ENCODE measurements at regions of chr1 and their contacts with region 1.

Region 1: DNA sequence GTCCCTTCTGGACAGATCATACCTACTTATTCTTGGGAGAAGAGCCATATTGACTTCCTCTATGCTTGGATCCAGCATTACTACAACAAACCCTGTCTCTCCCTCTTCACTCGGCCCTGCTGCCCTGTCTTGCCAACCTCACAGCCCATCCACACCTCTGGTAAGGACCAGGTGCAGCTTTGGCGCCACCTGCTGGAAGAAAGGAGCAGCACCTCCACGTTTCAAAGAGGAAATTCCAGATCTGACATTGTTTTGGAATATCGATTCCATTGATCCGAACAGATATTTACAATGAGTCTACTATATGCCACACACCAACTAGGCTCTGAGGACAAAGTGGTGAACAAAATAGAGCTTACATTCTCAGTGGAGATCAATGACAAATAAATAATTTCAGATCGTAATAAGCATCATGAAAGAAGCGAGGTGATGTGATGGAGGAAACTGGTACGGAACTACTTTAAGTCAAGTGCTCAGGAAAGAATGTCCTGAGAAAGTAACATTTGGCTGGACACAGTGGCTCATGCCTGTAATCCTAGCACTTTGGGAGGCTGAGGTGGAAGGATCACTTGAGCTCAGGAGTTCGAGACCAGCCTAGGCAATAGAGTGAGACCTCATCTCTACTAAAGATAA is 18.7 kb downstream of the MFSD2A start:
- DNase-seq: peak; percentile 51 to 84 (median 76)
- ATAC-seq: peak; percentile 75
- H3K4me3 ChIP-seq: no peak overlapping the region
- H3K4me3 Mint-ChIP-seq: no peak overlapping the region
- H3K27ac ChIP-seq: no peak overlapping the region
- H3K27ac Mint-ChIP-seq: no peak overlapping the region
- H3K4me1 ChIP-seq: peaks cover 3% of the 10 kb centered on the region
- H3K4me1 Mint-ChIP-seq: peaks cover 5% of the 10 kb centered on the region
- H3K27me3 ChIP-seq: no peaks in the 10 kb centered on the region
- H3K27me3 Mint-ChIP-seq: no peaks in the 10 kb centered on the region
- CTCF ChIP-seq: peak; percentile 92

Region 2: GRCh38 chr1:39745016-39745670 is 228.5 kb before region 1 on chr1:
- CTCF ChIA-PET with region 1: no interaction called
- POLR2A ChIA-PET with region 1: no interaction called
- intact Hi-C with region 1: no loop called
- DNase-seq: no peak
- ATAC-seq: no peak
- H3K4me3 ChIP-seq: no peak overlapping the region
- H3K4me3 Mint-ChIP-seq: no peak overlapping the region
- H3K27ac ChIP-seq: no peak overlapping the region
- H3K27ac Mint-ChIP-seq: no peak overlapping the region
- H3K4me1 ChIP-seq: peaks cover 2% of the 10 kb centered on the region
- H3K4me1 Mint-ChIP-seq: peaks cover 30% of the 10 kb centered on the region
- H3K27me3 ChIP-seq: no peaks in the 10 kb centered on the region
- H3K27me3 Mint-ChIP-seq: no peaks in the 10 kb centered on the region
- CTCF ChIP-seq: no peak

Region 3: GRCh38 chr1:39901698-39902459 is 71.7 kb before region 1 on chr1 and contains the start of gene MYCL:
- CTCF ChIA-PET with region 1: interaction called, 13 read pairs
- POLR2A ChIA-PET with region 1: no interaction called
- intact Hi-C with region 1: no loop called
- DNase-seq: peak; percentile 25 to 80 (median 69)
- ATAC-seq: peak; percentile 81
- H3K4me3 ChIP-seq: peak within 1 kb of the TSS; percentile 61 to 66
- H3K4me3 Mint-ChIP-seq: peak within 1 kb of the TSS; percentile 77
- H3K27ac ChIP-seq: no peak within 1 kb of the TSS
- H3K27ac Mint-ChIP-seq: no peak within 1 kb of the TSS
- H3K4me1 ChIP-seq: peaks cover 4% of the 10 kb centered on the region
- H3K4me1 Mint-ChIP-seq: peaks cover 7% of the 10 kb centered on the region
- H3K27me3 ChIP-seq: peaks cover 18 to 21% of the 10 kb centered on the region in 2 experiments
- H3K27me3 Mint-ChIP-seq: peaks cover 54% of the 10 kb centered on the region
- CTCF ChIP-seq: peak; percentile 63
- total RNA-seq, gene MYCL: 0.22 TPM in 1 of 2 experiments, not detected in the other

Region 4: GRCh38 chr1:39926343-39926793 is 47.3 kb before region 1 on chr1:
- CTCF ChIA-PET with region 1: interaction called, 196 read pairs
- POLR2A ChIA-PET with region 1: no interaction called
- intact Hi-C with region 1: no loop called
- DNase-seq: no peak
- ATAC-seq: no peak
- H3K4me3 ChIP-seq: no peak overlapping the region
- H3K4me3 Mint-ChIP-seq: no peak overlapping the region
- H3K27ac ChIP-seq: no peak overlapping the region
- H3K27ac Mint-ChIP-seq: no peak overlapping the region
- H3K4me1 ChIP-seq: no peaks in the 10 kb centered on the region
- H3K4me1 Mint-ChIP-seq: peaks cover 3% of the 10 kb centered on the region
- H3K27me3 ChIP-seq: no peaks in the 10 kb centered on the region
- H3K27me3 Mint-ChIP-seq: no peaks in the 10 kb centered on the region
- CTCF ChIP-seq: no peak

Region 5: DNA sequence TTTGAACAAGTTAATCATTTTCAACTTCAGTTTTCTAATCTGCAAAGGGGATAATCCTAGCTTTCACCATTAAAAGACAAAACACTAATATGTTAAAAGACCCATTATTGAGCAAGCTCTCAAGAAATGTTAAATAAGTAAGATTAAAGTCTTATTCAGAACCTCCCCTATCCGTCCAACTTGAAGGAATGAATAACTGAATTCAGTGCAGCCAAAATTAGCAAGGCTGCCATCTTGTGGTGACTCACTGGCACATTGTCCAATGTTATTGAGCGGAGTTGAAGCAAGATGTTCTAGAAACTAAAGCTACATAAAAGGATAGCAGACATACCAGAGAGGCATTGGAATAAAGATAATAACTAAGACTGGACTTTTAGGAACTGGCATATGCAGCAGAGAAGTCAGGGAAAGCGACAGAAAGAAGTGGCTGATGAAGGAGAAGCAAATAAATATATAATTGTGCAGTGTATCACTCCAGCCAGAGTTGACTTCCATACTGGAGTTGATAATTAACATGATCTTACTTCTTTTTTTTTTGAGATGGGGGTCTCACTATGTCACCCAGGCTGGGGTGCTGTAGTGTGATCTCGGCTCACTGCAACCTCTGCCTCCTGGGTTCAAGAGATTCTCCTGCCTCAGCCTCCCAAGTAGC is 58.7 kb after region 1 on chr1:
- CTCF ChIA-PET with region 1: interaction called, 41 read pairs
- POLR2A ChIA-PET with region 1: no interaction called
- intact Hi-C with region 1: no loop called
- DNase-seq: peak; percentile 15 to 77 (median 60)
- ATAC-seq: peak; percentile 67
- H3K4me3 ChIP-seq: no peak overlapping the region
- H3K4me3 Mint-ChIP-seq: no peak overlapping the region
- H3K27ac ChIP-seq: no peak overlapping the region
- H3K27ac Mint-ChIP-seq: peak overlapping the region; percentile 8
- H3K4me1 ChIP-seq: peaks cover 45% of the 10 kb centered on the region
- H3K4me1 Mint-ChIP-seq: peaks cover 49% of the 10 kb centered on the region
- H3K27me3 ChIP-seq: no peaks in the 10 kb centered on the region
- H3K27me3 Mint-ChIP-seq: no peaks in the 10 kb centered on the region
- CTCF ChIP-seq: peak; percentile 47

Measured in CD8-positive, alpha-beta T cell (primary cell).